Activated CD4-positive, alpha-beta T cell treated with anti-CD3 and anti-CD28 coated beads, Interleukin-2, amount 10 ng/mL, durations not matched to agents 7 days and 5 days (primary cell): ENCODE measurements at regions of chr2 and their contacts with region 1.

Region 1: GRCh38 chr2:64586883-64587481 is 62.9 kb downstream of the AFTPH start:
- DNase-seq: no peak
- H3K4me3 Mint-ChIP-seq: no peak overlapping the region
- H3K27ac Mint-ChIP-seq: no peak overlapping the region
- H3K4me1 Mint-ChIP-seq: peaks cover 3% of the 10 kb centered on the region
- H3K27me3 Mint-ChIP-seq: no peaks in the 10 kb centered on the region

Region 2: DNA sequence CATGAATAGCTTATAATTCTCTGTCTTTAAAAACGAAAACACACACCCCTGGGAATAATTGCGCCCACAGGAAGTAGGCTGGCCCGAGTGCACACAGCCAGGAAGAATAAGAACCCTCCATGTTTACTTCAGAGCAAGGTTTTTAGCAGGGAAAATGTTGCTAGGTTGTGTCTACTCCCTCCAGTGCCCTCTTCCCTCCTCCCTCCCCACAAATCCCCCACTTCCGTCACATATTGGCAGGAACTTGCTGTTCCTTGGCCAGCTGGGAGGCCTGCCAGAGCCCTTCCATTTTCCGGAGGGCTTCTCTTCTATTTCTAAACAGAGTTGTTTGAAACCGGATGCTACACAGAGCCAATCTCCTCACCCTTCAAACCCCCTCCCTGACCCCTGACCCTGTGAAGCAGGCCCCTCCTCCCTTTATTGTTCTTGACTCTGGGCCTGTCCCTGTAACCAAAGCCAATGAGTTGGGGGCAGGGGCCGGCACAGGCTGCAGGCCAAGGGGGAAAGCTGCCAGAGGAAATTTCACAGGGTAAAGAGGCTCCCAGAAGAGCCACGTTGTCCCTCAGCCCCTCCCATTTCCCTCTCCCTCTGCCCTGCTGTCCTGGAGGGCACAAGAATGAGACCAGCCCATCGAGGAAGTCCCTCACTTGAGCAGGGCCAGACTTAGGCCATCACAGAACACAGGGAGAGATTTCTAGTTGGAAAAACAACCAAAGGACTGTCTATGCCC is 182.8 kb before region 1 on chr2:
- CTCF ChIA-PET with region 1: no interaction called
- POLR2A ChIA-PET with region 1: no interaction called
- DNase-seq: no peak
- H3K4me3 Mint-ChIP-seq: no peak overlapping the region
- H3K27ac Mint-ChIP-seq: no peak overlapping the region
- H3K4me1 Mint-ChIP-seq: no peaks in the 10 kb centered on the region
- H3K27me3 Mint-ChIP-seq: peaks cover 5% of the 10 kb centered on the region

Region 3: GRCh38 chr2:64516628-64517510 is 70.1 kb before region 1 on chr2:
- CTCF ChIA-PET with region 1: no interaction called
- POLR2A ChIA-PET with region 1: no interaction called
- DNase-seq: no peak
- H3K4me3 Mint-ChIP-seq: no peak overlapping the region
- H3K27ac Mint-ChIP-seq: no peak overlapping the region
- H3K4me1 Mint-ChIP-seq: no peaks in the 10 kb centered on the region
- H3K27me3 Mint-ChIP-seq: peaks cover 34% of the 10 kb centered on the region

Region 4: DNA sequence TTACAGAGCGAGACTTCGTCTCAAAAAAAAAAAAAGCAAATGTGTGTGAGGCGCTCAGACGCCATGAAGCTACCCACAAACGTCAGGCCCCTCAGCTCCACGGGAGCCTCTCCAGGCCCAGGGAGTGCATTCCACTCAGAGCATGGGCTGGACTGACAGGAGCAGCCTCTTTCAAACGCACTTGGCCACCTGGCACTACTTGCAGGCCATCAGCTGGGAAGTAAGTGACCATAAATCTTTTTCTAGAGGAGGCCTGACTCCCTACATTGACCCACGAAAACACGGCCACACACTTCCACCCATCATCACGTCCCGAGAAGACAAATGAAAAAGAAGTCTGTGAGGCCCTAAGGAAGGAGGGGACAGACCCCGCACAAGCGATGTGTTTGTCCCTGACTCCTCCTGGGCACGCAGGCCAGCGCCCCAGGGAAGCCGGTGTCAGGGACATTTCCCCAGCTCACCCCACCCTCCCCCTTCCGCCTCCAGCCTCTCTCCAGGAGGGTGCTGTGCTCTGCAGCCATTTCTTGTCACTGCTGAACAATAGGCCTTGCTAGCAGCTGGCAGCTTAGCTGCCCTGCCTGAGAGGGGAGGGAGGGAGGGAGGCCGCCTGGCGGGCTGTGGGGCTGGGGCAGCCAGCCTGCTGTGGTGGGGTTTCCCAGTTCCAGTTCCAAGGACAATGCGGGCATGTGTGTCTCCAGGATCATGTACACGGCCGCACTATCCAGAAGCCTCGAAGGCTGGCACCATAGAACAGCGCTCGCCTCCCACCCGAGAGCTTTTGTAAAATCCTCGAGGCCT is 40.2 kb after region 1 on chr2:
- CTCF ChIA-PET with region 1: no interaction called
- POLR2A ChIA-PET with region 1: no interaction called
- DNase-seq: no peak
- H3K4me3 Mint-ChIP-seq: no peak overlapping the region
- H3K27ac Mint-ChIP-seq: no peak overlapping the region
- H3K4me1 Mint-ChIP-seq: peaks cover 3% of the 10 kb centered on the region
- H3K27me3 Mint-ChIP-seq: no peaks in the 10 kb centered on the region

Region 5: DNA sequence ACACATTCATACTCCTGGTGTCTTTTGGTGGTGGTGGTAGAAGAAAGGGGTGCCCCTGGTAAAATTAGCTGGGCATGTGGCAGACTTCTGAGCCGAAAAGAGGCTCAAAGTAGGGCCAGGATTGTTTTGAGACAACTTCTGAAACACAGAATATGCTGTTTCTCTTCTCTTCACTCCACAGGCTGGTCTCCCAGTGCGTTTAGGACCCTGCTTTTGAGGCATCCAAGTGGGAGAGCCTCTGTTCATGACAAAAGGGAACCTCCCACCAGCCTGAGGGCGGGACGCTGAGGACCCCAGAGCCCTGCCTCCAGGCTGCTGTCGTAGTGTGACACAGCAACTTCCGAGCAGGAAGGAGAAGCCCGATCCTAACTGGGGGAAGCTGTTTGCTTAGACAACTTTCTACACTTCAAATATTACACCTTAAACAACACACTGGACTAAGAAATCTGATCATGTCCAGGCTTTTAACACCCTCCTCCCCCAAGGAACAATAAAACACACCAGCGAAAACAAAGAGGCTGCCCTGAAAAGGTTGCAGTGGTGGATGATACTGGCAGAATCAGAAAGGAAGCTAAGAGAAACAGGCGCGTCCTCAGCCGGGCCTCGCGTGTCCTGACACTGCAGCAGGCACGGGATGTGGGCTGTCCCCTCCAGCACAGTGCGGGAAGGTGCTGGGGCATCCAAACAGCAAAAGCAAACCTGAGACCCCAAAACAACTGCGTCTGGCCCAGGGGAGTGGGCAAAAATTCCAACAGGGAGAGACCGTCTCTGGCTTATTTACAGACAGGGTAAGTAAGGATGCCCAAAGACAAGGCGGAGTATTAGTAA is 57.4 kb after region 1 on chr2:
- CTCF ChIA-PET with region 1: no interaction called
- POLR2A ChIA-PET with region 1: interaction called, 11 read pairs
- DNase-seq: peak; percentile 74
- H3K4me3 Mint-ChIP-seq: peak overlapping the region; percentile 79
- H3K27ac Mint-ChIP-seq: peak overlapping the region; percentile 93
- H3K4me1 Mint-ChIP-seq: peaks cover 79% of the 10 kb centered on the region
- H3K27me3 Mint-ChIP-seq: no peaks in the 10 kb centered on the region